ENCODE measurements at regions of chr2 and their contacts with region 1.

Region 1: GRCh38 chr2:162301151-162301804 is 17.2 kb downstream of the IFIH1 start:
- DNase-seq: peak; percentile 74
- H3K4me3 ChIP-seq: no peak overlapping the region
- H3K27ac ChIP-seq: no peak overlapping the region
- H3K4me1 ChIP-seq: no peaks in the 10 kb centered on the region
- H3K27me3 ChIP-seq: no peaks in the 10 kb centered on the region
- CTCF ChIP-seq: peak; percentile 87

Region 2: DNA sequence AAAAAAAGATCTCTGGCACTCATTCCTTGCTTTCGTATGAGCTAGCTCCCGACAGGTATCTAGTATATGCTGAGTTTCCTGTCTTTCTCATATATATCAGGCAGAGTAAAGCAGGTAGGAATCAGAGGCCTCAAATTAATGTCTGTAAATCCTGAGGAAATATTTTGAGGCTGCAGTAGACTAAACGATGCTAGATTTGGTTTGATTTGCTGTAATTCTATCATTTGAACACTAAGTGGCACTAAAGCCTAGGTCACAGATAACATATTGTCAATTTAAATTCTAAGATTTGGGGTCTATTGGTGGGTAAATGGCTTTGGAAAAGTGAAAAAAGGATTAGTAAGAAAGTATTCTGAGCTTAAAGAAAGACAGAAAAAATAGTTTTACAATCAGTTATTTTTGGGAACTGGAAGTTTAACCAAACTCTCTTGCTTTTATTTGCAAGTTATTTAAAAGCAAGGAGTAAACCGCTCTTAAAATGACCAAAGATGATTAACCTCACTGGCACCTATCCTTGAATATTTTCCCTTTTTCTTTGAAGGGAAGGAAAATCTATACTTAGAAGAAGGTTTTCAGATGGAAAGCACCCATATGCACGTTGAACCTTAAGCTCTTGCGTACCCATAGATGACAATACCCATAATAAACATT is 714.6 kb before region 1 on chr2:
- CTCF ChIA-PET with region 1: no interaction called
- POLR2A ChIA-PET with region 1: no interaction called
- intact Hi-C with region 1: loop called (anchors 5 kb)
- DNase-seq: peak; percentile 56
- H3K4me3 ChIP-seq: no peak overlapping the region
- H3K27ac ChIP-seq: no peak overlapping the region
- H3K4me1 ChIP-seq: no peaks in the 10 kb centered on the region
- H3K27me3 ChIP-seq: no peaks in the 10 kb centered on the region
- CTCF ChIP-seq: peak; percentile 78

Region 3: GRCh38 chr2:161965994-161966393 is 335.3 kb before region 1 on chr2:
- CTCF ChIA-PET with region 1: no interaction called
- POLR2A ChIA-PET with region 1: no interaction called
- intact Hi-C with region 1: loop called (anchors 10 kb)
- DNase-seq: peak; percentile 30
- H3K4me3 ChIP-seq: no peak overlapping the region
- H3K27ac ChIP-seq: no peak overlapping the region
- H3K4me1 ChIP-seq: no peaks in the 10 kb centered on the region
- H3K27me3 ChIP-seq: no peaks in the 10 kb centered on the region
- CTCF ChIP-seq: no peak

Region 4: DNA sequence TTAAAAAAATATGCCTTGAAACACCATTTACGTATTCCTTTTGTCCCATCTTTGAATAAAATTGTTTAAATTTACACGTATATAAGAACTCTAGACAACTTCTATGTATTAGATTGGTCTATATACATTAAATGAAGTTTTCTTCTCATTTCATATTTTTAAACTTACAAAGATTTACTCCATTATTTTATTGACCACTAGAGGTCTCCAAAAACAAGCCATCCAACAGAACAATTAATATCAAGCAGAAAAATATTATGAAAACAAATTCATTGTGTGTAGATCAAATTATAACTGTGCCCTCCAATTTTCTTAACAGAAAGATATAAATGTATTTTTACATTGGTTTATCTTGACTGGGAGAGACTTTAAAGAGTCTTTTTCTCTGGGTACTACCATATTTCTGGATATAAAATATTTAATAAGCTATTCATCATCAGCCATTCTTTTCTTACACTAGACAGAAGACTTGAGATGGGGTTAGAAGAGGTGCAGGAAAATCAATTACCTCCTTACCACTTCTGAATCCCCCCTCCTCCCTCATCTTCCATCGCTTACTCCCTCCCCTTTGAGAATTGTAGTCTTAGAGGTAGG is 293.7 kb before region 1 on chr2:
- CTCF ChIA-PET with region 1: no interaction called
- POLR2A ChIA-PET with region 1: no interaction called
- intact Hi-C with region 1: loop called (anchors 10 kb)
- DNase-seq: peak; percentile 16
- H3K4me3 ChIP-seq: no peak overlapping the region
- H3K27ac ChIP-seq: no peak overlapping the region
- H3K4me1 ChIP-seq: no peaks in the 10 kb centered on the region
- H3K27me3 ChIP-seq: no peaks in the 10 kb centered on the region
- CTCF ChIP-seq: peak; percentile 73

Region 5: DNA sequence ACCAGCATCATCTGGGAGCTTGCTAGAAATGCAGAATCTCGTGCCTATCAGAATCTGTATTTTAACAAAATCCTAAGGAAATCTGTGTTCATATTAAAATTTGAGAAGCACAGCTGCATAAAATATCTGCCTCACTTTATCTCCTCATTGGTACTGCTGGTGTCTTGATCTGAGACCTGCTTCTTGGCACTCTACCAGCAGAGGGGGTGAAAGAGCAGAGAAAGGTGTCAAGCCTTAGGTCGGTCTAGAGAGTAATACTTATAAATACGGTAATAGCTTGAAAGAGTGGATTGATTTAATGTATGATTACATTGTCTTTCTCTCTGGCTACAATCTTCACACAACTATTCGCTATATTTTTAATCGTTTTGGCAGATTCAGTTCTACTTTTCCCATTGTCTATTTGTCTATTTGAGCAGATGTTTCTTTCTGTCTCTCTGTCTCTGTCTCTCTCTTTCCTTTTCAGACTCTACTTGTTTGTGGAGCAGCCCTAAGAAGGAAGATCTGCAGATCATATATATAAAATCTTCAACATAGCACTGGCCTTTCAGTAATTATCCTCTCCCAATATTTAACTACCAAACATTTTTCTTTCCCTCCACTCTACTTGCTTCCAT is 147.6 kb before region 1 on chr2:
- CTCF ChIA-PET with region 1: interaction called, 12 read pairs
- POLR2A ChIA-PET with region 1: no interaction called
- intact Hi-C with region 1: loop called (anchors 1 kb)
- DNase-seq: peak; percentile 62
- H3K4me3 ChIP-seq: no peak overlapping the region
- H3K27ac ChIP-seq: no peak overlapping the region
- H3K4me1 ChIP-seq: no peaks in the 10 kb centered on the region
- H3K27me3 ChIP-seq: no peaks in the 10 kb centered on the region
- CTCF ChIP-seq: peak; percentile 77

Region 6: GRCh38 chr2:162221064-162221463 is 80.2 kb before region 1 on chr2:
- CTCF ChIA-PET with region 1: interaction called, 39 read pairs
- POLR2A ChIA-PET with region 1: no interaction called
- intact Hi-C with region 1: loop called (anchors 1 kb)
- DNase-seq: peak; percentile 63
- H3K4me3 ChIP-seq: no peak overlapping the region
- H3K27ac ChIP-seq: no peak overlapping the region
- H3K4me1 ChIP-seq: no peaks in the 10 kb centered on the region
- H3K27me3 ChIP-seq: no peaks in the 10 kb centered on the region
- CTCF ChIP-seq: peak; percentile 89

Region 7: DNA sequence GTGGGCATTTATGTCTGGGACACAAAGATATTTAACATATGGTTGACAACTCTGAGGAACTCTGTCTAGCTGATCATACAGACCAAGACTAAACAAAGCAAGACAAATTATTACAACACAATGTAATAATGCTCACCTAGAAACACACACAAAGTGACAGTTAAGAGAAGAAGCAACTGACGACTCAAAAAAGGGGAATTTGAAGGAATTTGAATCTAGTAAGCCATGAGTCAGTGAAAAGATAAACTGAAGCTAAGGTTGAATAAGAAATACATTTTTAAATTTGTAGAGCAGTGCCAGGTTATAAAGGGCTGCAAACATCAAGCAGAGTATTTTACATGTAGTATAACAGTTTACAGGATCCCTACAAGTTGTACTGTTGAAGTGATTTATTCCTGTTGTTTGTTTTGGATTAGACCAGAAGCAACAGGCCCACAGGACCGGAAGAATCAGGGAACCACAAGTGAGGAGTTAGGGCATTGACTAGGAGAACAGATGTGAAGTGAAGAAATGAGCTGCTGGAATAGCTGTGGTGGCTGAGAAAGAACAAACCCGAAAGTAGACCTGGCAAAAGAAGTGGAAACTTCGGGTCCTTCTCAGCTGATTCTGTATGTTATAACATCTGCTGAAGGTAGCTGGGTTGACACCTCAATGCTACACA is 18.4 kb before region 1 on chr2:
- CTCF ChIA-PET with region 1: no interaction called
- POLR2A ChIA-PET with region 1: no interaction called
- intact Hi-C with region 1: no loop called
- DNase-seq: no peak
- H3K4me3 ChIP-seq: no peak overlapping the region
- H3K27ac ChIP-seq: no peak overlapping the region
- H3K4me1 ChIP-seq: no peaks in the 10 kb centered on the region
- H3K27me3 ChIP-seq: no peaks in the 10 kb centered on the region
- CTCF ChIP-seq: no peak